Esophagus muscularis mucosa (tissue), 4 donors: ENCODE measurements at regions of chr20 and their contacts with region 1.

Region 1: DNA sequence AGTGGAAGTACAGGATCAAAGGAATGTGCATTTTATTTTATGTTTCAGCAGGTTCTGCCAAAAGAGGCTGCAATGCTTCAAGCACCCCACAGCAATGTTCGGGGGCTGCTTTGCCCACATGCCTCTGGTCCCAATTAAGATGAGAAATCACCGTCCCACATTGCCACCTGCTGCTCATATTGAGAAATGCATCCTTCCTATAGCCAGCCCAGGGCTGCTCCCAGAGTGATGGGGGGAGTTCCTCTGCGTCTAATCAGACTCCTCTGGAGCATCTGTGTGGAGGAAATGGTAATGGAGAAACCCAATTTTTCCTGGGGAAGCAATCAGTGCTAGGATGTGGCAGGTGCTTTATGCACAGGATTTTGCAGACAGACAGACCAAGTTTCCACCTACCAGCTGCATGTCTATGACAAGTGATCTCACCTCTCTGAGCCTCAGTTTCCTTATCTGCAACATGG is 33.7 kb downstream of the PTGIS start:
- DNase-seq: no peak
- H3K4me3 ChIP-seq: no peak overlapping the region
- H3K27ac ChIP-seq: no peak overlapping the region
- H3K4me1 ChIP-seq: no peaks in the 10 kb centered on the region
- H3K27me3 ChIP-seq: no peaks in the 10 kb centered on the region
- CTCF ChIP-seq: peak; percentile 82 to 90 (median 85)
- EP300 ChIP-seq: no peak
- POLR2A ChIP-seq: no peak

Region 2: GRCh38 chr20:48620519-48621254 is 913.6 kb before region 1 on chr20:
- intact Hi-C with region 1: no loop called
- DNase-seq: no peak
- H3K4me3 ChIP-seq: peak overlapping the region; percentile 37 to 43 (median 40)
- H3K27ac ChIP-seq: peak overlapping the region; percentile 2 to 53 (median 30)
- H3K4me1 ChIP-seq: peaks cover 20 to 27% (median 22%) of the 10 kb centered on the region in 4 donors
- H3K27me3 ChIP-seq: no peaks in the 10 kb centered on the region
- CTCF ChIP-seq: peak; percentile 80 to 95 (median 82)
- EP300 ChIP-seq: no peak
- POLR2A ChIP-seq: no peak

Region 3: GRCh38 chr20:49256261-49256660 is 278.0 kb before region 1 on chr20:
- intact Hi-C with region 1: loop called (anchors 10 kb)
- DNase-seq: no peak
- H3K4me3 ChIP-seq: no peak overlapping the region
- H3K27ac ChIP-seq: no peak overlapping the region
- H3K4me1 ChIP-seq: no peaks in the 10 kb centered on the region
- H3K27me3 ChIP-seq: no peaks in the 10 kb centered on the region
- CTCF ChIP-seq: no peak
- EP300 ChIP-seq: no peak
- POLR2A ChIP-seq: no peak

Region 4: DNA sequence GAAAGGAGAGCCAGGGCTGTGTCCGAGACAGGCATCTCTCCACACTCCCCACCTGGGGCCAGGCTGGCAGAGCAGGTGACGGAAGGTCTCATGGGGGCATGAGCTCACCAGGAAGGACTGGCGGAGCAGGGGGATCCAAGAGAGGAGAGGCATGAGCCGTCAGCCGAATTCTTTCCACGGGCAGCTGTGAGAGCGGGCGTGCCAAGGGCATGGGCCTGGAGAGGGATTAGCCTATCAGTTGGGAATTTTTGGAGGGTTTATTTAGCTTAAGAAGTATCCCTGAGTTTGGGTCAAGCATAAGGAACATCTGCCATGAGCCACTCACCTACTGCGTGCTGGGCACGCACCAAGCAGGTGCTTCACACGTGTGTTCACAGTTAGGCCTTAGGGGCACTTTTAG is 196.2 kb before region 1 on chr20:
- intact Hi-C with region 1: loop called (anchors 1 kb)
- DNase-seq: no peak
- H3K4me3 ChIP-seq: no peak overlapping the region
- H3K27ac ChIP-seq: no peak overlapping the region
- H3K4me1 ChIP-seq: peaks cover 0 to 37% (median 22%) of the 10 kb centered on the region in 4 donors
- H3K27me3 ChIP-seq: no peaks in the 10 kb centered on the region
- CTCF ChIP-seq: no peak
- EP300 ChIP-seq: no peak
- POLR2A ChIP-seq: no peak